ENCODE measurements at regions of chr6 and their contacts with region 1.

Region 1: GRCh38 chr6:167420858-167421766 is 96.2 kb downstream of the TTLL2 start:
- DNase-seq: no peak

Region 2: DNA sequence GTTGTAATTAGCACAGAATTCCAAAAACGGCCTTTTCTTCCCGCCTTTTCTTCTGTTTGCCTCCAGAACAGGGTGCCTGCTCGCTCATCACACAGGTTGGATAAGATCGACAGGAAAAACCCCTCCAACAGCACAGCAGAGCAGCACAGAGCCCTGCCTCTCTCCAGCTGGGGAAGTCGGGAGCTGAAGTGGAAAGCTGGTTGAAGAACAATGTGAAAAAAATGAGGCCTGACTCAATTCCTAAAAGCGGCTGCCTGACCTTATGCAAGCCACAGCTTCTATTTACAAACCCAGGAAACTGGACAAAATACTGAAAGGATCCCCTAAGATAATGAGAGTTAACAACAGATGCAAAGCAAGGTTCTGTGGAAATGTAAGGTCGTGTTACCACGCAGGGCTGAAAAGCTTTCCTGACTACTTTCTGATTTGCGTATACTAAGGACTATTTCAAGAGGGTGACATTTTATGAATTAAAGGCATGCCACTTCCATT is 20.6 kb after region 1 on chr6:
- intact Hi-C with region 1: no loop called
- DNase-seq: peak; percentile 40

Region 3: GRCh38 chr6:167888098-167888497 is 467.0 kb after region 1 on chr6:
- intact Hi-C with region 1: loop called in 1 of 2 experiments (anchors 5 kb)
- DNase-seq: no peak